Head of caudate nucleus (tissue), 42 donors: ENCODE measurements at regions of chr6 and their contacts with region 1.

Region 1: DNA sequence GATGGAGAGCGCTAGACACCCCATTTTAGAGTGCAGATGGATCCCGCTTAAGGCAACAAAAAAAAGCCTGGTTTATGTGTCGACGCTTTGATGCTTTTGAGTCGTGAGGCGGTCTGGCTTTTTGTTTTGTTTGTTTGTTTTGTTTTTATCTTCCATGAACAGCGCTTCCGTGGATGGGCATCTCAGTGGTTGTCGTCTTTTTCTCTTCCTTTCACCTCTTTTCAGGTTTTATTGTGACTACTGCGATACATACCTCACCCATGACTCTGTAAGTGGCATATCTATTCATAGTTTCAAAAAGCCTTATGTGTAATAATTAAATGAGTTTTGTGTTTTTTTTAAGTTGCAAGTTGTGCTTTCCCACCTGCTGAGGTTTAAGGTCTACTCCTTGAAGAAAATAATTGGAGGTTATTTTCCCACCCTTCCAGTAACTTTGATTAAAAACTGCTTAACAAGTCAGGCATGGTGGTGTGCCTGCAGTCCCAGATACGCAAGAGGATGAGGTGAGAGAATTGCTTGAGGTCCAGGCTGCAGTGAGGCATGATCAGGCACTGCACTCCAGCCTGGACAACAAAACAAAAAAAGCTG is 476 bp downstream of the SNRPC start:
- DNase-seq: peak in 2 of 42 donors; percentile 1 to 15

Region 2: DNA sequence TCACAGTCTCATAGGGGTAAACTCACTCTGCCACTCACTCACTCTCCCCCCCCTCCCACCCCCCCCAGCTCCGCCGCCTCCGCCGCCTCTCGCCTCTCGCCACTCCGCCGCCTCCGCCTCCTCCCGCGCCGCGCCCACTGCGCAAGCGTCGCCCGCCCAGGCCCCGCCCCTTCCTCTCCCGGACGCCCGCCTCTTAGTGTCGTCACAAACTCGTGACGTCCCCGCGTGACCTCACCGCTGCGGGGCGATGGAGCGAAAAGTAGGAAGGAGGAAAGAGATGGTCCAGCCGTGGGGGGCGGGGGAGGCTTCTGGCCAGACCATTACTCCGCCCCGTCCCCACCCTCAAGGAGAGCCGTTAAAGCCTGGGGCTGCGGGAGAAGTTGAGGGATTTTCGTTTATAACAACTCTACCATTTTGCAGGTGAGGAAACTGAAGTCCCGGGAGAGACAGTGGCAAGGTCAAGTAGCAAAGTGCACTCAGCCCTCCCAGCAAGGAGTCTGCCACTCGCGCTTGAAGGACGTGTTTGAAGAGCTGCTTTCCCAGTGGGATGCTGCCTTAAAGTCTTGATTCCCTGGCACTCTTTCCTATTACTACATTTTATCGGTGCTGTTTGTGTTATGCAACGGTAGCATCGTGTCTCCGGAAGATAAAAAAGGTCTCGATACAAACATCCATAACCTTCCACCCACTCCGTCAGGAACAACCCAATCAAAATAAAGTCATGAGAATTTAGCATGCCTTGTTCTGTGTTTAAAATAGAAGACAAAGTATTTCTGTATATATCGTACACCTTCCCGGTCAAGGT is 60.8 kb before region 1 on chr6 and contains the start of gene ILRUN:
- intact Hi-C with region 1: loop called (anchors 5 kb)
- DNase-seq: peak; percentile 92 to 99 (median 96)

Region 3: DNA sequence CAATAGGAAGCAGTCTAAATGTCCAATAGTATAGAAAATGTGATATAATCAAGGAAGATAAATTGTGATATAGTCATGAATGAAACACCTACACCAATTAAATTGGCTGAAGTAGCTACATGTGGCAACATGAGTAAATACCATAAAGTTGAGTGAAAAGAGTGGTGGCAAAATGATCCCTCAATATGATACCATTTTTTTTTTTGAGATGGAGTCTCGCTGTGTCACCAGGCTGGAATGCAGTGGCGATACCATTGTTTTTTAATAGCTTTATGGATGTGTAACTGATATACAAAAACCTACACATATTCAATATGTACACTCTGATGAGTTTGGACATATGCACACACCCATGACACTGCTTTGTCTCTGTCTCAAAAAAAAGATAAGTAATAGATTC is 40.3 kb before region 1 on chr6:
- intact Hi-C with region 1: no loop called
- DNase-seq: no peak

Region 4: GRCh38 chr6:34887753-34888513 is 130.2 kb after region 1 on chr6 and contains the start of gene TAF11:
- intact Hi-C with region 1: loop called (anchors 10 kb)
- DNase-seq: peak; percentile 82 to 97 (median 93)